ENCODE measurements at regions of chr14 and their contacts with region 1.

Region 1: DNA sequence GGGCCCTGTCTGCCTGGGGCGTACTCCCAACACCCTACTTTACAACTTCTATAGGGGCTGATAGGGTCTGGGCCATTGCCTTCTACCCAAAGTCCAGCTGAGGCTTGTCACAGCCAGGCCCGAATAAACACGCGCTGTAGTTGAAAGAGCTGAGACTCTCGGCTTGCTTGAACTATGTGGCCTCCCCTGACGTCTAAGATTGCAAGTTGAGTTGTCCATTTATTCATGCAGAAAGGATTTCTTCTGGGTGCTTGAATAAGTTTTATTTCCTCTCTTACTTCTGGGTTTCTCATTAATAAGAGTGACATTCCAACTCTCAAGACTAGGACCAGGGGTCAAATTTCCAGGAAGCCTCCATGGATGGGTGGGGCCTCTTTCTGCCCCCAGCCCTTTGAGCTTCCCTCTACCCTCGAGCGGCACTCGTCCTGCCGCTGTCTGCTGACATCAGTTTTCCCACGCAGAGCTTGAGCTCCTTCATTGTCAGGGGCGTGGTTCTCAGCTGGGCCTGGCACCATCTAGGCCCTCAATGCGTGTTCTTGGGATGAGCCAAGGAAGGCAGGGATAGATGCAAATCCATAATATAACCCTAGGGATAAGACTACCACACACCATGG is 74.3 kb upstream of the VRK1 start:
- DNase-seq: no peak
- ATAC-seq: no peak
- H3K4me3 ChIP-seq: no peak overlapping the region
- H3K4me3 Mint-ChIP-seq: no peak overlapping the region
- H3K27ac ChIP-seq: no peak overlapping the region
- H3K27ac Mint-ChIP-seq: no peak overlapping the region
- H3K4me1 ChIP-seq: no peaks in the 10 kb centered on the region
- H3K4me1 Mint-ChIP-seq: no peaks in the 10 kb centered on the region
- H3K27me3 ChIP-seq: peaks cover 0 to 30% of the 10 kb centered on the region in 2 experiments
- H3K27me3 Mint-ChIP-seq: peaks cover 16 to 35% of the 10 kb centered on the region in 2 donors

Region 2: GRCh38 chr14:96710060-96710666 is 12.7 kb before region 1 on chr14:
- CTCF ChIA-PET with region 1: interaction called in 1 of 2 experiments, 13 read pairs
- POLR2A ChIA-PET with region 1: no interaction called
- DNase-seq: no peak
- ATAC-seq: no peak
- H3K4me3 ChIP-seq: no peak overlapping the region
- H3K4me3 Mint-ChIP-seq: no peak overlapping the region
- H3K27ac ChIP-seq: no peak overlapping the region
- H3K27ac Mint-ChIP-seq: no peak overlapping the region
- H3K4me1 ChIP-seq: no peaks in the 10 kb centered on the region
- H3K4me1 Mint-ChIP-seq: no peaks in the 10 kb centered on the region
- H3K27me3 ChIP-seq: peaks cover 0 to 36% of the 10 kb centered on the region in 2 experiments
- H3K27me3 Mint-ChIP-seq: peaks cover 26 to 42% of the 10 kb centered on the region in 2 donors

Measured in T-cell (primary cell).